Naive thymus-derived CD4-positive, alpha-beta T cell (primary cell): ENCODE measurements at regions of chr5 and their contacts with region 1.

Region 1: GRCh38 chr5:40502736-40503135 is 177.0 kb upstream of the PTGER4 start:
- DNase-seq: no peak
- ATAC-seq: no peak
- H3K4me3 ChIP-seq: no peak overlapping the region
- H3K4me3 Mint-ChIP-seq: no peak overlapping the region
- H3K27ac ChIP-seq: no peak overlapping the region
- H3K27ac Mint-ChIP-seq: no peak overlapping the region
- H3K4me1 ChIP-seq: no peaks in the 10 kb centered on the region
- H3K4me1 Mint-ChIP-seq: peaks cover 5 to 14% (median 6%) of the 10 kb centered on the region in 7 donors
- H3K27me3 ChIP-seq: no peaks in the 10 kb centered on the region
- H3K27me3 Mint-ChIP-seq: no peaks in the 10 kb centered on the region

Region 2: DNA sequence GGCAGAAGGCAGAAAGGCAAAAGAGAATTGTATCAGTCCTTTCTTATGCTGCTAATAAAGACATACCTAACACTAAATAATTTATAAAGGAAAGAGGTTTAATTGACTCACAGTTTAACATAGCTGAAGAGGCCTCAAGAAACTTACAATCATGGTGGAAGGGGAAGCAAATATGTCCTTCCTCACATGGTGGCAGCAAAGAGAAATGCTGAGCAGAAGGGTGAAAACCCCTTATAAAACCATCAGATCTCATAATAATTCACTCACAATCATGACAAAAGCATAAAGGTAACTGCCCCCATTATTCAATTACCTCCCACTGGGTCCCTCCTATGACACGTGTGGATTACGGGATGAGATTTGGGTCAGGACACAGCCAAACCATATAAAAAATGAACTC is 135.5 kb before region 1 on chr5:
- CTCF ChIA-PET with region 1: no interaction called
- POLR2A ChIA-PET with region 1: no interaction called
- intact Hi-C with region 1: loop called in 1 of 2 experiments (anchors 1 kb)
- DNase-seq: peak in 7 of 9 donors; percentile 18 to 53 (median 38)
- ATAC-seq: peak; percentile 54
- H3K4me3 ChIP-seq: no peak overlapping the region
- H3K4me3 Mint-ChIP-seq: no peak overlapping the region
- H3K27ac ChIP-seq: no peak overlapping the region
- H3K27ac Mint-ChIP-seq: peak overlapping the region in 6 of 9 donors; percentile 19 to 86 (median 66)
- H3K4me1 ChIP-seq: peaks cover 0 to under 1% of the 10 kb centered on the region in 2 donors
- H3K4me1 Mint-ChIP-seq: peaks cover 0 to 17% (median 8%) of the 10 kb centered on the region in 7 donors
- H3K27me3 ChIP-seq: no peaks in the 10 kb centered on the region
- H3K27me3 Mint-ChIP-seq: no peaks in the 10 kb centered on the region

Region 3: GRCh38 chr5:40557501-40557900 is 54.8 kb after region 1 on chr5:
- CTCF ChIA-PET with region 1: no interaction called
- POLR2A ChIA-PET with region 1: no interaction called
- intact Hi-C with region 1: loop called in 1 of 2 experiments (anchors 5 kb)
- DNase-seq: no peak
- ATAC-seq: no peak
- H3K4me3 ChIP-seq: no peak overlapping the region
- H3K4me3 Mint-ChIP-seq: no peak overlapping the region
- H3K27ac ChIP-seq: no peak overlapping the region
- H3K27ac Mint-ChIP-seq: no peak overlapping the region
- H3K4me1 ChIP-seq: no peaks in the 10 kb centered on the region
- H3K4me1 Mint-ChIP-seq: peaks cover 0 to 12% (median 0%) of the 10 kb centered on the region in 7 donors
- H3K27me3 ChIP-seq: no peaks in the 10 kb centered on the region
- H3K27me3 Mint-ChIP-seq: no peaks in the 10 kb centered on the region